ENCODE measurements at regions of chr1 and their contacts with region 1.

Region 1: DNA sequence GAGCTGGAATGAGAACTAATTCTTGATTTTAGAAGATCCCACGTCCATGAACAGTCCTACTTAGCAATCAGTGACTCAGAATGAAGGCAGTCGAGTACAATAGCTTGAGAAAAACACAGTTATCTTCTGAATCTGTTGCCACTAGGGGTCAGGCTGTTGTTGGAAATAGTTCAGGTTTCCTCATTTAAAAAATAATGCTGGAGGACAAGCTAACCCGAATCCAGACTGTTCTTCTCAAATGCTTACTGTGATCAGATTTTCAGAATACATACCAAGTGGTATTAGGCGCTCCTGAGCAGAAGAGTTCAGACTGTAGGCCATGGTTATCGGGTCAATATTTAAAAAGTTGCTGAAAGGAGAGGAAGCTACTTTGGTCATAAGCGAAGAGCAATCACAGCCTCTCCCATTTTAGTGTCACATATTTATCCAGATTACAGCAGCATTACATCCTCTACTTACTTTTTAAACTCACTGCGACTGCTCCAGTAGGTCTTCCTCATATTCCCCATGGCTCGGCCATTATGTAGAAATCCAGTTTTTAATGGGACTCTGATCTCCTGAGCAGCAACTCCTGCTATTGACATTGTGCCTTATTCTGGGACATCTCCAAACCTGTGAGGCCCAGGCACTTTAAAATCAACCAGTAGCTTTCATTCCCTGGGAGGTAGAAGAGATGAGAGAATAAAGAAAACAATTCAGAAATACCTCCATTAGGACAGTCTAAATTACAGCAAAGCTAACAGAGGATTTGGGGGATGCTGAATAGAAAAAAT is 10.9 kb downstream of the ERRFI1 start:
- DNase-seq: peak; percentile 68

Region 2: DNA sequence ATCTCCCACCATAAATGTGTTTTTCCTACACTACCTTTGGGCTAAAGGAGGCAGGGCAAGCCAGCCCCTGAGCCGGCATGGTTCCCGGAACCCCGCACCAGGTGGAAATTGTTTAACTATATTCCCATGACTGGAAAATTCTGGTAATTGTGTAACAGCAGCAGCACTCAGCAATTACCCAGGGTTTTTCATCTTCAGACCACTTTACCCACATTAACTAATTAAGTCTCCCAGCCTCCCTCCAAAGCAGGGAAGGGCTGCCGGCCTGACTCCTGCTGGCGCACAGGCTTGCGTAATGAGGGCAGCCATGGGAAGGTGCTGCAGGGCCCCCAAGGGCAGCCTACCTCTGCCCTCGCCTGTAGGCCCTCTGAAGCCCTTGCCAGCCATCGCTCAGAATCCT is 384.8 kb before region 1 on chr1:
- in situ Hi-C with region 1: no loop called
- DNase-seq: no peak

Region 3: GRCh38 chr1:8154621-8155052 is 139.4 kb after region 1 on chr1:
- in situ Hi-C with region 1: no loop called
- DNase-seq: no peak

Region 4: DNA sequence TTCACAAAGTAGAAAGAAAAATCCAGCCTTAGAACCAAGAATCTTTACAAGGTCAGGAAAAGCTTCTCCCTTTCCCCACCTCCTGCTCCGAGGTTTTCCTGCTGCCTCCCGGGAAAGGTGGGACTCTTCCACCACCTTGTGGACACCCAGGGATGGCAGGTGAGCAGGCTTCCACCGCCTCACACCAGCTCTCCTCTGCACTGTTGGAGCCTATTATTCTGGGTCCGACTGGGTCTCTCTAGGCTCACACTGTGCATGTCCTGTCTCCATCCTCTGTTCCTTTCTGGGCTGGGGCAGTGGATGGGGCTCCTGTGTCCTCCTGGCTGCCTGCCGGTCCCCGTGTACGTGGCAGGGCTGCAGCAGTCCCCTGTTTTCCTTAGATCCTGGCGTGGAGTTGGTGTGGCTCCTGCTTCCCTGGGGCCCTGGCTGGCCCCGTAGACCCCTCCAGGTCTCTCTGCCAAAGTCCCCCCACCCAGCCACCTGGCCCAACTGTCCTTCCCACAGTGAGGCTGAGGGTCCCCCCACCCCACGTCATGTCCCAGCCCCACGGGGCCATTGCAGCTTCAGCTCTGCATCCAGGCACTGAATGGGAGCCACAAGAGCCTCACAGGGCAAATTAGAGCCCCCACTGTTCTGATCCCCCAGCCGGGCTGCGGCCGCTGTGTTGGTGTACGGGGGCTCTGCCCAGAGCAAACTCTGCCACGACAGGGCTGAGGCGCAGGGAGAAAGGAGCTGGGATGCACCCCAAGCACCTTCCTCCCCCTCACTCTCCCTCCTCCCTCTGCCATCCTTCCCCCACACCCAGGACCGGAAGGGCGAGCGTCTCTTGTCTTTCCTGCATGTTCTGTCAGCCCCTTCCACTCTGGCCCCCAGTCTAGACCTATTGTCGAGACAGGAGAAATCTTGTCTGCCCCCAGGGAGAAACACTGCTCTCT is 299.4 kb after region 1 on chr1:
- in situ Hi-C with region 1: loop called (anchors 25 kb)
- DNase-seq: peak; percentile 61